Posterior cingulate gyrus (tissue), 11 donors: ENCODE measurements at regions of chr1 and their contacts with region 1.

Region 1: DNA sequence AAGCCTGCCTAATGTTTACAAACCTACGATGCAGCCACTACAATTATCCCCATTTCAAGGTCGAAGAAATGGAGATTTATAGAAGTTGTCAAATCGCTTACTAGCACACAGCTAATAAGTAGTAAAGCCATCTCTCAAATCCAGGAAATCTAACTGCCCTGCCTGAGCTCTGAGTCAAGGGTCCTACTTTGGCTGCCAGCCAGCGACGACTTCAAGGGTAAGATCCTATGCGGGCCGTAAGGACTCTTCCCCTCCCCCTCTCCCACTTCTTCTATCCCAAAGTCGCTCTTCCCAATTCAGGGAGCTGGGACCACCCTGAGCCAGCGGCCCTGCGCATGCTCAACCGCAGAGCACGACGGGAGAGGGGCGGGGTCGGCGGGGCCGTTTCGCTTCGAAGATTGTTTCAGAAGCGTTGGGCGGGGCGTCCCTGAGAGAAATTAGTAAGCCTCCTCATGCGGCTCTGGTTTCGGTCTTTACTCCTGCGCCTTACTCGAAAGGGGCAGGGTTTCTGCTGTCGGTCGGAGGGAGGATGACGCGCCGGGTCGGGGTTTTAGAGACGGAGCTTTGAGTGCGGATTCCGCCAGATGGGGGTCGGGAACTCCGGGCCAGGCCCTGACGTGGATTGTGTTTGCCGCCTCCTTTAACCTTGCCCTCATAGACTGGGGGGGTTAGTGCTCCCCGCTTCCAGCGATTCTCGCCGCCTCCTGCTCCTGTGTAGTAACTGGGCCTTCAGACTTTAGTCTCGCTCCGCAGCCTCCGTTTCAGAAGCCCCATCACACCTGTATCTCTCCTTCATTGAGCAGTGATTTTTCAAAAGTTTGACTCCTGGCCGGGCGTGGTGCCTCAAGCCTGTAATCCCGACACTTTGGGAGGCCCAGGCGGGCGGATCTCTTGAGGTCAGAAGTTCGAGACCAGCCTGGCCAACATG is at the start of gene ZMYM1:
- DNase-seq: peak; percentile 76 to 97 (median 86)

Region 2: DNA sequence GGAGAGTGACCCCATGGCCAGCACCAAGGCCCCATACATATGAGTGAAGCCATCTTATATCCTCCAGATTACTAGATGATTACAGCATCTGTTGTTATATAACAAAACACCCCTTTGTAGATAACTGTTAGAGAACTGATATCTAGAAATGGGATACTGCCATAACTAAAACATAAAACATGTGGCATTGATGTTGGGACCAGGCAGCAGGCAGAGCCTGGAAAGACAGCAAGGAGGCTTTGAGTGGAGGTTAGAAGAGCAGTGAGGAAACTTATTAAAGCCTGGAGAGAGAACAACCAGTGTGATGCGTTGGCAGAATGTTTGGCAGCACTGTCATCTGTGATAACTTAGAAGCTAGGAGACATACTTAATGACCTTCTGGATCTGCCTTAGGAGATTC is 42.1 kb before region 1 on chr1:
- intact Hi-C with region 1: loop called (anchors 5 kb)
- DNase-seq: no peak